ENCODE measurements at regions of chr13 and their contacts with region 1.

Region 1: GRCh38 chr13:113029487-113030258 is 60.7 kb downstream of the MCF2L start:
- DNase-seq: no peak
- H3K4me3 ChIP-seq: no peak overlapping the region
- H3K27ac ChIP-seq: no peak overlapping the region
- H3K4me1 ChIP-seq: peaks cover 0 to 2% (median under 1%) of the 10 kb centered on the region in 4 donors
- H3K27me3 ChIP-seq: peaks cover 0 to 32% of the 10 kb centered on the region in 2 donors
- CTCF ChIP-seq: peak; percentile 48 to 55

Region 2: GRCh38 chr13:112928020-112928971 is 101.4 kb before region 1 on chr13:
- intact Hi-C with region 1: no loop called
- DNase-seq: no peak
- H3K4me3 ChIP-seq: no peak overlapping the region
- H3K27ac ChIP-seq: no peak overlapping the region
- H3K4me1 ChIP-seq: no peaks in the 10 kb centered on the region
- H3K27me3 ChIP-seq: peaks cover 0 to 60% of the 10 kb centered on the region in 2 donors
- CTCF ChIP-seq: no peak

Region 3: DNA sequence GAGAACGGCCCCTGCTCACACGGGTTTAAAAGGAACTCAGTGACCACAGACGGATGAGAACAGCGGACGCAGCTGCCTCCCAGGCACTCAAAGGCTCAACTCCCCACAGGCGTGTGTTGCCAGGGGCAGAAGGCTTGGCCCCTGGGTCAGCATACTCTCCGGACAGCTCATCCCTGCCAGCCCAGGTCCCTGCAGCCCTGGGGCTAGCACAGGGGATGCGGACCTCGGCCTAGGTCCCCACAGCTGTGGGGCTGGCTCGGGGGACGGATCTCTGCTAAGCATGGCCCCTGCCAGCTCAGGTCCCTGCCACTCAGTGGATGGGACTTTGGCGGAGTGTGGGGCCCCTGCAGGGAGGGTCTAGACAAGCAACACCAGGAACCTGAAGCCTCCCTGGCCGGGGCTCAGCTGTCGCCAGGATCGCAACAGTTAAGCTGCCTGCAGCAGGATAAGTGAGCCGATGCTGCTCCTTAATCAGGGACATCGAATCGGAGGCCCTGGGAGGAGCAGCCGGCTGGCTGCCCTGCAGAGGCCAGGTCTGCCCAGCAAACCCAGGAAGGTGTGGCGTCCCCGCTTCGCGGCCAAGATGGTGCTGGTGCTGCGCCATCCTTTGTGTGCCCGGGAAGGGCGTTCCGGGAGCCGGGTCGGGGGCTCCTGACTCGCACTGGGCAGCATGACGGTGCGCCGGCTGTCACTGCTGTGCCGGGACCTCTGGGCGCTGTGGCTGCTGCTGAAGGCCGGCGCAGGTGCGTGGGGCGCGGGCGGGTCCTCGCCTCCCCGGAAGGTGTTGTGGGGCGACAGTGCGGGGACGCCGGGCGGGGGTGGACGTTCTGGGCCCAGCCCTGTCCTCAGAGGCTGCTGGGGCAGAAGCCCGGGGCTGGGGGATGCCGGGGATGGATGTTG is 28.2 kb before region 1 on chr13:
- intact Hi-C with region 1: no loop called
- DNase-seq: no peak
- H3K4me3 ChIP-seq: peak overlapping the region in 1 of 2 donors; percentile 30
- H3K27ac ChIP-seq: no peak overlapping the region
- H3K4me1 ChIP-seq: peaks cover 0 to 20% (median 10%) of the 10 kb centered on the region in 4 donors
- H3K27me3 ChIP-seq: peaks cover 0 to 73% of the 10 kb centered on the region in 2 donors
- CTCF ChIP-seq: no peak

Region 4: GRCh38 chr13:113153810-113154748 is 124.4 kb after region 1 on chr13:
- intact Hi-C with region 1: loop called (anchors 10 kb)
- DNase-seq: peak; percentile 80 to 89
- H3K4me3 ChIP-seq: peak overlapping the region; percentile 48 to 57
- H3K27ac ChIP-seq: peak overlapping the region; percentile 73 to 83
- H3K4me1 ChIP-seq: peaks cover 0 to 19% (median 8%) of the 10 kb centered on the region in 4 donors
- H3K27me3 ChIP-seq: peaks cover 0 to 2% of the 10 kb centered on the region in 2 donors
- CTCF ChIP-seq: no peak